ENCODE measurements at regions of chr7 and their contacts with region 1.

Region 1: GRCh38 chr7:26090927-26091519 is 61.0 kb upstream of the NFE2L3 start:
- DNase-seq: no peak
- ATAC-seq: peak in 2 of 8 donors; percentile 57 to 69
- H3K4me3 ChIP-seq: peak overlapping the region in 1 of 10 donors; percentile 13
- H3K27ac ChIP-seq: no peak overlapping the region
- H3K4me1 ChIP-seq: peaks cover 0 to 9% (median 0%) of the 10 kb centered on the region in 9 donors
- H3K27me3 ChIP-seq: peaks cover 0 to 12% (median 0%) of the 10 kb centered on the region in 7 donors
- CTCF ChIP-seq: peak; percentile 45 to 79 (median 68)

Region 2: DNA sequence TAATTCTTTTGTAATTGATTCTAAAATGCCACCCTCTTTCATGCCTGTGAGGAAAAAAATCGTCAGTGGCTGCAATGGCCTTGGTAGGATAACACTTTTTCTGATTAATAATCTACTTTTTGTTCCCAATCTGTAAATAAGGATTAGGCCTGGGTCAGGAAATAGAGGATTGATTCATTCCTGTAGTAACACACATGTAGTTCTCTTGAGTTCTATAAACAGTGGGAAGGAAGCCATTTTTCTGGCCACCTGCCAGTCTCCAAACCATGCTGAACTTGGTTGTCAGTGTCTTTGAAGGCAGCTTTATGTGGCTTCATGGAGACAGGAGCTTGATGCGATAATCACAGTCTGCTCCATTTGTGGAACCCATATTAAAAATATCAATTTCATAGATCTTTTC is 108.3 kb before region 1 on chr7:
- intact Hi-C with region 1: no loop called
- DNase-seq: no peak
- ATAC-seq: no peak
- H3K4me3 ChIP-seq: no peak overlapping the region
- H3K27ac ChIP-seq: no peak overlapping the region
- H3K4me1 ChIP-seq: no peaks in the 10 kb centered on the region
- H3K27me3 ChIP-seq: peaks cover 0 to 22% (median 5%) of the 10 kb centered on the region in 7 donors
- CTCF ChIP-seq: no peak

Region 3: DNA sequence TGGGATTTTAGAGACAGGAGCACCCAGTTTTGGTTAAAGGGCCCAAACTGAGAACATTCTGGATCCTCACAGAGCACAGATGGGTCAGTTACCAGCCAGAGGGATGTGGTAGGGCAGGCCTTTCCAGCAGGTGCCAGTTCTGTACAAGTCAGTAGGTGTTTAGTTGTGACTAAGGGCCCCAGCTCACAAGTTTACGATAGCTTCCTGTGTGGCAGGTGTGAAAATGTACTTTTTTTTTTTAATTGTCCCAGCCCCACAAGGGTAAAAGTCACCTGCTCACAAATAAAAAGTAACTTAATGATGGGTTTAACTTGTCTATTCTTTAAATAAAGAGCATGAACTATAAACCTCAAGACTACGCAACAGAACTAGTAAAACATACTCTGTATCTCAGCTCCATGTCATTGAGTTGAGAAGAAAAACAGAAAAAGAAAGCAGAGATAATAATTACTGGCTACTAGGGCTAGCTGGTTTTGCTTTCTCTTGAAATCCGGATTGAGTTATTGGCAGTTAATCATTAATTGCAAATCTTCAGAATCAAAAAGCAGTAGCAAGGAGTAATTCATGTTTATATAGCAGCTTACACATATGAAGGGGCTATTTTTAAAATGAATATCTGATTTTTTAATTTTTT is 76.4 kb after region 1 on chr7:
- intact Hi-C with region 1: no loop called
- DNase-seq: no peak
- ATAC-seq: no peak
- H3K4me3 ChIP-seq: no peak overlapping the region
- H3K27ac ChIP-seq: no peak overlapping the region
- H3K4me1 ChIP-seq: peaks cover 0 to 5% (median 0%) of the 10 kb centered on the region in 9 donors
- H3K27me3 ChIP-seq: no peaks in the 10 kb centered on the region
- CTCF ChIP-seq: no peak

Region 4: DNA sequence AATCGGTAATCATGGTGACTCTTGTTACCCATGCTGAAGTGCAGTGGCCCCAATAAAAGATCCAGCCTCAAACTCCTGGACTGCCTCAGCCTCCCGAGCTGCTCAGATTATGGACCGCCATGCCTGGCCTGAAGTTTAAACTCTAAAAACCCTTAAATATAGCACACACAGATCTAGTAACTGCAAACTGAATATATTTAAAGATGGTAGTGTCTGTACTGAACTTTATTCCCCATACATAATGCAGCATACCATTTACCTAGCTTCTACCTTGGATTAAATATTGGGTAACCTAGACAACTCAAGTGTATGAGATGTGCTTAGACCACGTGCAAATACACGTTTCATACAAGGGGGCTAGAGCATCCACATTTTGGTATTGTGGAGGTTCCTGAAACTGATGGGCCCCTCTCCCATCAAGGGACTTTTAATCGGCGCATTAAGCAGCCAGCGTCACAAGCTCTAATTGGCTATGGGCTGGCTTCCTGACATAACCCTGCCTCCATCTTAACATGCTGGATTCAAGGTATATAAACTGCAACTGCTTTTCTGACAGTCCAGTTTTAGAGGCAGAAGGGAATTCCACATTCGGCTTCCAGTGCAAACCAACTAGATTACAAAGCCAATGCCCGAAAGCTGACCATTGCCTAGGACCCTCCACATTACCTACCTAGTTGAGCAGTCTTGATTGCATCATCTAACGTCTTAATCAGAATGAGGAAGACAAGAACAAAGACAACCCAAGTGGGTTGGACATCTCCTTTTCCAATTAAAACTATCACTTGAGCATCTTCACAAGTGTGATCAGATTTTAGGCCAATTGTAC is 96.6 kb after region 1 on chr7:
- intact Hi-C with region 1: loop called in 1 of 10 experiments (anchors 10 kb)
- DNase-seq: no peak
- ATAC-seq: peak in 1 of 8 donors; percentile 24
- H3K4me3 ChIP-seq: no peak overlapping the region
- H3K27ac ChIP-seq: no peak overlapping the region
- H3K4me1 ChIP-seq: peaks cover 3 to 76% (median 34%) of the 10 kb centered on the region in 9 donors
- H3K27me3 ChIP-seq: no peaks in the 10 kb centered on the region
- CTCF ChIP-seq: no peak

Region 5: GRCh38 chr7:26200444-26201246 is 109.6 kb after region 1 on chr7 and contains the start of gene HNRNPA2B1:
- intact Hi-C with region 1: loop called in 1 of 10 experiments (anchors 5 kb)
- DNase-seq: peak; percentile 95 to 97
- ATAC-seq: peak; percentile 82 to 93 (median 87)
- H3K4me3 ChIP-seq: peak within 1 kb of the TSS; percentile 65 to 99 (median 88)
- H3K27ac ChIP-seq: peak within 1 kb of the TSS; percentile 93 to 100 (median 99)
- H3K4me1 ChIP-seq: peaks cover 6 to 56% (median 51%) of the 10 kb centered on the region in 9 donors
- H3K27me3 ChIP-seq: no peaks in the 10 kb centered on the region
- CTCF ChIP-seq: peak in 1 of 9 donors; percentile 19
- total RNA-seq, gene HNRNPA2B1: 364 to 445 (median 398) TPM

Region 6: GRCh38 chr7:26365077-26365900 is 274.3 kb after region 1 on chr7:
- intact Hi-C with region 1: loop called (anchors 1 to 5 kb)
- DNase-seq: peak in 1 of 2 donors; percentile 57
- ATAC-seq: peak; percentile 65 to 89 (median 80)
- H3K4me3 ChIP-seq: no peak overlapping the region
- H3K27ac ChIP-seq: no peak overlapping the region
- H3K4me1 ChIP-seq: peaks cover 0 to 26% (median 0%) of the 10 kb centered on the region in 9 donors
- H3K27me3 ChIP-seq: peaks cover 0 to 62% (median 40%) of the 10 kb centered on the region in 7 donors
- CTCF ChIP-seq: peak; percentile 53 to 87 (median 77)

Region 7: GRCh38 chr7:26675143-26675887 is 584.3 kb after region 1 on chr7:
- intact Hi-C with region 1: loop called in 3 of 10 experiments (anchors 10 kb)
- DNase-seq: no peak
- ATAC-seq: no peak
- H3K4me3 ChIP-seq: no peak overlapping the region
- H3K27ac ChIP-seq: no peak overlapping the region
- H3K4me1 ChIP-seq: no peaks in the 10 kb centered on the region
- H3K27me3 ChIP-seq: peaks cover 0 to 49% (median 18%) of the 10 kb centered on the region in 7 donors
- CTCF ChIP-seq: no peak